Activated T-helper 1 cell treated with anti-CD3 and anti-CD28 coated beads, Interleukin-12 subunit alpha, Interleukin-12 subunit beta, Interleukin-2, Interleukin-4 antibody, amounts not matched to agents 30 ng/mL and 10 ng/mL and 1 ng/mL, durations not matched to agents 14 hours and 24 hours and 36 hours (primary cell): ENCODE measurements at regions of chr21 and their contacts with region 1.

Region 1: GRCh38 chr21:33641336-33642026 is at the start of gene CRYZL1:
- DNase-seq: peak; percentile 100
- H3K4me3 Mint-ChIP-seq: peak within 1 kb of the TSS; percentile 89
- H3K27ac Mint-ChIP-seq: peak within 1 kb of the TSS; percentile 96
- H3K4me1 Mint-ChIP-seq: peaks cover 14% of the 10 kb centered on the region
- H3K27me3 Mint-ChIP-seq: peaks cover 23% of the 10 kb centered on the region
- total RNA-seq, gene CRYZL1: 25.6 and 34.8 TPM in 2 replicates

Region 2: GRCh38 chr21:33380483-33380998 is 260.9 kb before region 1 on chr21:
- intact Hi-C with region 1: loop called (anchors 5 kb)
- DNase-seq: peak; percentile 70
- H3K4me3 Mint-ChIP-seq: peak overlapping the region; percentile 23
- H3K27ac Mint-ChIP-seq: peak overlapping the region; percentile 84
- H3K4me1 Mint-ChIP-seq: peaks cover 54% of the 10 kb centered on the region
- H3K27me3 Mint-ChIP-seq: peaks cover 40% of the 10 kb centered on the region

Region 3: GRCh38 chr21:33491373-33492102 is 149.9 kb before region 1 on chr21 and contains the start of gene DNAJC28:
- intact Hi-C with region 1: loop called (anchors 1 kb)
- DNase-seq: peak; percentile 91
- H3K4me3 Mint-ChIP-seq: peak within 1 kb of the TSS; percentile 84
- H3K27ac Mint-ChIP-seq: peak within 1 kb of the TSS; percentile 74
- H3K4me1 Mint-ChIP-seq: peaks cover 11% of the 10 kb centered on the region
- H3K27me3 Mint-ChIP-seq: peaks cover 12% of the 10 kb centered on the region
- total RNA-seq, gene DNAJC28: 0.12 and 0.18 TPM in 2 replicates

Region 4: GRCh38 chr21:33588485-33589335 is 52.8 kb before region 1 on chr21 and contains the start of gene DONSON:
- intact Hi-C with region 1: loop called (anchors 1 kb)
- DNase-seq: peak; percentile 90
- H3K4me3 Mint-ChIP-seq: peak within 1 kb of the TSS; percentile 92
- H3K27ac Mint-ChIP-seq: peak within 1 kb of the TSS; percentile 84
- H3K4me1 Mint-ChIP-seq: peaks cover 31% of the 10 kb centered on the region
- H3K27me3 Mint-ChIP-seq: no peaks in the 10 kb centered on the region
- total RNA-seq, gene DONSON: 37.5 and 38.7 TPM in 2 replicates

Region 5: GRCh38 chr21:33655591-33656221 is 14.2 kb after region 1 on chr21:
- intact Hi-C with region 1: no loop called
- DNase-seq: no peak
- H3K4me3 Mint-ChIP-seq: no peak overlapping the region
- H3K27ac Mint-ChIP-seq: no peak overlapping the region
- H3K4me1 Mint-ChIP-seq: no peaks in the 10 kb centered on the region
- H3K27me3 Mint-ChIP-seq: peaks cover 5% of the 10 kb centered on the region

Region 6: GRCh38 chr21:33780631-33781030 is 139.2 kb after region 1 on chr21:
- intact Hi-C with region 1: no loop called
- DNase-seq: no peak
- H3K4me3 Mint-ChIP-seq: no peak overlapping the region
- H3K27ac Mint-ChIP-seq: no peak overlapping the region
- H3K4me1 Mint-ChIP-seq: no peaks in the 10 kb centered on the region
- H3K27me3 Mint-ChIP-seq: no peaks in the 10 kb centered on the region

Region 7: DNA sequence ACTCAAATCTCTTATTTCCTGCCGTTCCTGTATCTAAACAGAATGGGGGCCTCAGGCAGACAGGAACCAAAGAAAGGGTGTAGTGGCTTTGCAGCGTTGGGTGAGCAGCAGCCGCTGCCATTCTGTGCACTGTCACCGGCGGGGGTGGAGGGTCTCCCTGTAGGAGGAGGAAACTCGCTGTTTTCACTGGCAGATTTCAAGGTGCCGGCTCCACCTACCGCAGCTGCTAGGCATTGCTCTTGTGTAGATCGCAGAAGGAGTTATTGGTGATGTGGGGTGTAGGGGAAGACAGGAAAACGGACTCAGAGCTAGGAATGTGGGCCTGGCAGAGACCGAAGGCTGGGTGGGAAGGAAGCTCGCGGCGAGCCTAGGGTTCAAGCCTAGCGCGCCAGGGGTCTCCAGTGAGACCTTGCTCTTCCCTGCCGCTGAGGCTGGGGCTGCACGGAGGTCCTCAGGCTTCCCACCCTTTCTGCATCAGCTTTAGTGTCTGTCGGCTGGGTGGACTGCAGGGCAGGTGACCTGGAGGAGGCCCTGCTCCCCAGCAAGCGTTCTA is 253.3 kb after region 1 on chr21:
- intact Hi-C with region 1: loop called (anchors 1 kb)
- DNase-seq: peak; percentile 35
- H3K4me3 Mint-ChIP-seq: peak overlapping the region; percentile 1
- H3K27ac Mint-ChIP-seq: peak overlapping the region; percentile 43
- H3K4me1 Mint-ChIP-seq: peaks cover 14% of the 10 kb centered on the region
- H3K27me3 Mint-ChIP-seq: peaks cover 5% of the 10 kb centered on the region

Region 8: DNA sequence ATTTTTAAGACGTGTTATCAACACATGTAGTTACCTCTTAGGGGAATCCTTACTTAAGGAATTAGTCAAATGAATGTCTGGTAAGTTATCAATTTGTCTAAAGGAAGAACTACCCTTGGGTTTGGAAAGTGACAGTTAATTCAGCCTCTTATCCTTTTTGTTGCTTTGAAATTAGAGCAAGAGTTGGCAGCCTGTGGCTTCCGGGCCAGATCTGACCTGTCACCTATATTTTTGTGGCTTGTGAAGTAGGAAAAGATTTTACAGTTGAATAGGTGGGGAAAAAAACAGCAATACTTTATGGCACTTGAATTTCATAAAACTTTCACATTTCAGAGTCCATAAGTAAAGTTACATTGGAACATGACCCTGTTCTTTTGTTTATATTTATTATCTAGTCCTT is 437.4 kb after region 1 on chr21:
- intact Hi-C with region 1: loop called (anchors 5 kb)
- DNase-seq: no peak
- H3K4me3 Mint-ChIP-seq: peak overlapping the region; percentile 61
- H3K27ac Mint-ChIP-seq: peak overlapping the region; percentile 70
- H3K4me1 Mint-ChIP-seq: peaks cover 96% of the 10 kb centered on the region
- H3K27me3 Mint-ChIP-seq: no peaks in the 10 kb centered on the region

Region 9: DNA sequence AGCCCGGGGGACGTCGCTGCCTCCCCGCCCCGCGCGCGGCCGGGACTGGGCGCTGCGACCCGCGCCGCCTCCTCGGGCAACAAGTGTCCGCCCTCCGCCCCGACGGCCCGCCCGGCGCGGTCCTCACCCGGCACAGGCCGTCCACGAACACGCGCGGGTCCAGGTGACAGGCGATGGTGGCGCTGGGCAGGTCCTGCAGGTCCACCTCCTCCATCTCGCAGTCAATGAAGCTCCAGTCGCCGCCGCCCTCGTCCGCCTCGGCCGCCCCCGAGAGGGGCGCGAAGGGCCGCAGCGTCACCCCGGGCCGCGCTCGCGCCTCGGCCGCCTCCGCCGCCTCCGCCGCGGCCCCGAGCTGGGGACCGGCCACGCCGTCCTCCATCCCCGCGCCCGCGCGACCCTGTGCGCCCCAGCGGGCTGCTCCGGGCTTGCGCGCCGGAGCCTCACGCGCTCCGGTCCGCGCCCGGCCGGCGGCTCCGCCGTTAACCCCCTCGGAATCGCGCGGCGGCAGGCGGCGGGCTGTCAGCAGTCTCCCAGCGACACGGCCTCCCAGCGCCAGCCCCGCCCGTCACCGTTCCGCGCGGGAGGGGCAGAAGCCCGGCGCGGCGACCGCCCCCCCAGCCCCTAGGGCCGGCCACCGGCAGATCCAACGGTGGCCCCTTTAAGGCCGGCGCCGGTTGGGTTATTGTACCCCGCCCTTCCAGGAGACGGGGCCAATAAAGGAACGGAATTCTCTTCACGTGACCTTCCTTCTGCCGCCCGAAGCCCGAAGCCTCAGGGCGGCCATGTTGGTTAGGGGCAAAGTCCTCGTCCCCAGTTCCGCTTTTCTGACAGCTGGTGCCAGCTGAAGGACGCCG is 973.4 kb after region 1 on chr21 and contains the start of gene RCAN1:
- intact Hi-C with region 1: loop called (anchors 5 kb)
- DNase-seq: peak; percentile 86
- H3K4me3 Mint-ChIP-seq: peak within 1 kb of the TSS; percentile 85
- H3K27ac Mint-ChIP-seq: peak within 1 kb of the TSS; percentile 57
- H3K4me1 Mint-ChIP-seq: peaks cover 30% of the 10 kb centered on the region
- H3K27me3 Mint-ChIP-seq: peaks cover 5% of the 10 kb centered on the region
- total RNA-seq, gene RCAN1: 10.7 and 11.1 TPM in 2 replicates